PC-9 (cell line): ENCODE measurements at regions of chr2 and their contacts with region 1.

Region 1: DNA sequence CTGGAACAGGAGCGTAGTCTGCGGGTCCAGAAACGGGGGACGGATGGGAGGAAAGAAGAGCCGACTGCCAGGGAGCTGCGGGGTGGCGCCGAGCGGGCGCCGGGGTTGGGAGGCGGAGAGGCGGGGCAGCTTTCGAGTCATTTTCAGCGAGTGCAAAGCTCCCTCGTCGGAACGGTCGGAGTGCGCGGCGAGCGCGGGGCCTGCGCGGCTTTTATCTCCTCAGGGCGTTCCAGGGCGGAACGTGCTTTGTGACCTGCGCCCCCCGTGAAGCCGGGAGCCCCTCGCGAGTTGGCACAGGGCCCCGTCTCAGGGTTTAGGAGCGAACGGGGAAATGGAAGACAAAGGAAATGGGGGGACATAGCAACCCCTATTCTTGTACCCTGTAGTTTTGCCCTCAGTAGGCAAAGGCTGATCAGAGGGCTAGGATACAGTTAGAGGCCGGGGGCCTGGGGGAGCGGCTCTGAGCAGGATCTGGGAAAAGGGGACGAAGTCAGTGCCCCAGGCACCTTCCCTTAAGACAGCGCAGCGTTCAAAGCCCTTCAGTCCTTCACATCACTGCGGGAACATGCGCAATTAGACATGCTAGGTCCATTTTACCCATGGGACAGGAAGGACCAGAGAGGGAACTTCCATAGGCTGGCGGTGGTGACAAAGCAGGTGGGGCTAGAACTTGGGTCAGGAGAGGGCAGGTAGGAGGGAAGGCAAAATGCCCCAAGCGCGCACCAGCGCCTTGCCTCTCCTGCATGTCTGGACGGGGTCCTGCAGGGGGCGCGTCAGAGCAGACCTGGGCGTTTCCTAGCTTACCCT is 60.1 kb upstream of the IL1RL1 start:
- DNase-seq: peak in 1 of 2 experiments; percentile 69
- H3K4me3 ChIP-seq: peak overlapping the region; percentile 6; the same call in 1 of the 2 replicates
- H3K27ac ChIP-seq: no peak overlapping the region
- H3K4me1 ChIP-seq: peaks cover 9% of the 10 kb centered on the region
- H3K27me3 ChIP-seq: no peaks in the 10 kb centered on the region
- CTCF ChIP-seq: peak; percentile 48

Region 2: GRCh38 chr2:102033031-102033749 is 218.1 kb before region 1 on chr2:
- CTCF ChIA-PET with region 1: no interaction called
- POLR2A ChIA-PET with region 1: no interaction called
- intact Hi-C with region 1: no loop called
- DNase-seq: peak; percentile 67 to 77
- H3K4me3 ChIP-seq: no peak overlapping the region
- H3K27ac ChIP-seq: no peak overlapping the region
- H3K4me1 ChIP-seq: peaks cover 23% of the 10 kb centered on the region
- H3K27me3 ChIP-seq: no peaks in the 10 kb centered on the region
- CTCF ChIP-seq: no peak

Region 3: DNA sequence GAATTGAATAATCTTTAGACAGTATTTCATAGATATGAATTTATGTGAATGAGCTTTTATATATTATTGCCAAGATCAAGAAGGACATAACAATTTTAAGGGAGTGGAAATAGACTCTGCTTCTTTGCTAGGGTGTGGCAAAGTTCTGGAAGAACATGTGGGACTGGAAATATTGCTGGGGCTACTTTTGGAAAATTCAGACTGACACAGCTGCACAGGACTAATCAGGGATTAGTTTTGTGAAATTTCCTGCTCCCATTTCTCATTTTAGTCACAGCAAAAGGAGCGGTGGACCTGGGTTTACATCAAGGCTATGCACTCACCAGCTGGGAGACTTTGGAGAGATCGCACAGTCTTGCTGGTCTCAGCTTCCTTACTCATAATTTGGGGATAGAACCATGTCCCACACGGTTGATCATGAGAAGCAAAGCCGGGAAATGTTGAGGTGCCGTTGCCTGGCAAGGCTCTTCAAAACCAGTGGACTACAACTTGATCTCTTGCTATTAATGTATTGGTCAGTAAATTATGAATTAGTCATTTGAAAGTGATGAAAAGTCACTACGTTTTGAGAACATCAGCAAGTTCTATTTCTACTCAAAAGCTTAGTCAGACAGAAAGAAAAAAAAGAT is 22.0 kb before region 1 on chr2:
- CTCF ChIA-PET with region 1: no interaction called
- POLR2A ChIA-PET with region 1: no interaction called
- intact Hi-C with region 1: no loop called
- DNase-seq: no peak
- H3K4me3 ChIP-seq: no peak overlapping the region
- H3K27ac ChIP-seq: no peak overlapping the region
- H3K4me1 ChIP-seq: peaks cover 28% of the 10 kb centered on the region
- H3K27me3 ChIP-seq: no peaks in the 10 kb centered on the region
- CTCF ChIP-seq: no peak

Region 4: DNA sequence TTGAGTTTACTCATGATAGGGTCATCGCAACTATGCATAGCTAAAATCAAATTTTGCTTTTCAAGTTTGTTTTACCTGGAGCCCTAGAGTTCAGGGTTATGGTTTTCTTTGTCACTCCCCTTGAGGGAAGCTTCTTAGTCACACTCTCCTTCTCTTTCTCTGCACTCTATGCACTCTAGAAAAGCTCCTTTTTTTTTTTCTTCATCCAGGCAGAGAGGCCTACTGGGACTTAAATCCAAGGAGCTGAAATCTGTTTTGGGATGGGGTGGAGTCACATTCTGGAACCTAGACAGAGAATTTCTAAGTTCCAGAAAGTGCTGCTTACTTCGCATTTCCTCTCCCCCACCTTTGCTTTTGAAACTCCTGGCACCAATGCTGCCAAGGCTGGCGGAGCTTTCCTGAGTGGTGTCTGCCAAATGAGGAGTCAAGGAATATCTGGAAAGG is 85.3 kb after region 1 on chr2:
- CTCF ChIA-PET with region 1: interaction called, 11 read pairs
- POLR2A ChIA-PET with region 1: no interaction called
- intact Hi-C with region 1: no loop called
- DNase-seq: peak; percentile 24 to 80
- H3K4me3 ChIP-seq: peak overlapping the region; percentile 58; the same call in 1 of the 2 replicates
- H3K27ac ChIP-seq: peak overlapping the region; percentile 89
- H3K4me1 ChIP-seq: peaks cover 44% of the 10 kb centered on the region
- H3K27me3 ChIP-seq: no peaks in the 10 kb centered on the region
- CTCF ChIP-seq: no peak